Activated CD4-positive, alpha-beta memory T cell treated with anti-CD3 and anti-CD28 coated beads for 36 hours (primary cell): ENCODE measurements at regions of chr3 and their contacts with region 1.

Region 1: DNA sequence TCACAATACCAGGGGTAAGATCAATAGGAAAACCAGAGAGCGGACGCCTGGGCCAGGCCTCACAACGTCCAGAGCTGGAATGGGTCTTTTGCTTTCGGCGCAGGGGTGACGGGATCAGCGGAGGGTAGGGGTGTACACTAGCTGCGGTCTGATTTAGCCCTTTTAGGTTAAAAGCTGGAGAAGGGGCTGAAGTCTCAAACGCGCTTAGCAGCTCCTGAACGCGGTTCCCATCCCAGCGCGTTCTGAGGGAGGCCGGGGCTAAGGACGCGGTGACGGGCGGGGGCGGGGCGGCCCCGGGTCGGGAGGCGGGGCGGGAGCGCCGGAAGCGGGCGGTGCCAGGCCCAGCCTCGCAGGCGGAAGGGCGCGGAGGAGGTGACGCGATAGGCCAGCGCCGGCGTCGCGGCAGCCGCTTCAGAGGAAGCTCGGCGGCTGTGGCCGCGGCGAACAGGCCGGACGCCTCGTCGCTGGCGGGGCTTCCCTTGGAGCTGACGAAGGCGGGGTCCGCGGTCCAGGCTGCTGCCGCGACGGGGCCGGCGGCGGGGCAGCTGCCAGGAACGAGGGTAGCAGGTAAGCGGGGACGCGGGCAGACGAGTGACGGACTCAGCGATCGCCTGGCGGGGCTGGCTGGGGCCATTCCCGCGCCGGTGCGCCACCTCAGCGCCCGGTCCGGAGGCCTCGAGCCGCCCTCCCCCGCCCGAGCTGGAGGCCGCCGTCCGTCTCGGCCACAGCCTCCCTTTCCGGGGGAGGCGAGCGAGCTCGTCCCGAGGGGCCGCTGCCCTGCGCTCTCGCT is at the start of gene SENP5:
- DNase-seq: peak; percentile 94
- H3K4me3 Mint-ChIP-seq: peak within 1 kb of the TSS; percentile 84
- H3K27ac Mint-ChIP-seq: peak within 1 kb of the TSS; percentile 85
- H3K4me1 Mint-ChIP-seq: peaks cover 29% of the 10 kb centered on the region
- H3K27me3 Mint-ChIP-seq: no peaks in the 10 kb centered on the region
- total RNA-seq, gene SENP5: 30.5 to 32.0 TPM

Region 2: DNA sequence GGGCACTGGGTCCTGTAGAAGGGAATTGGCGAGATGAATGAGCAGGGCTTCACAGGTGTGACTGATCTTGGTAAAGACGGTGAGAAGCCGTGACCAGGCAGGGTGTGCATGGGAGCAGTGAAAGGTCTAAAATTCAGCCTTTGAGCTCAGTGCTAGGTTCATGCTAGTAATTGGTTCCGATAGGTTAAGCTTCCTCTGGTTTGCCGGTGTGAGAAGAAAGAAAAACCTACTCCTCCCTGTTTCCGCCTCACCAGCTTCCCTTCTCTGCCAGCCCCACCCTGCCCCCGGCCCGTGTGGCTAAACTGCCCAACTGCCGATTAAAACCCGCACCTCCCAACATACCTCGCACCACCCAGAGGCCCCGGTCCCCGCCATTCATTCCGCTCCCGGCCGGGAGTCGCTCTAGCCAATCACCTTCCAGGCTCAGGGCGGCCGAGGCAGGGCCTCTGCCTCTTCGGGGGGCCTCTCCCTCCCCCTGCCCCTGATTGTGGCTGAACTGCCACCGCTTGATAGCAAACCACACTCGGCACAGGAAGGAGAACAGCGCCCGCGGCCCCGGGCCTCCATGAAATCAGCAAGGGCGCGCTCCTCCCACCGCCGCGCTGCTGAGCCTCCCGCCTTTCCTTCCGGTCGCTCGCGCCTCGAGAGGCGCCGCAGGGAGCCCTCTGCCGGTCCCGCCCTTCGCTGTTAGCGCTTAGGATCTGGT is 235.5 kb before region 1 on chr3:
- CTCF ChIA-PET with region 1: no interaction called
- POLR2A ChIA-PET with region 1: no interaction called
- intact Hi-C with region 1: loop called (anchors 10 kb)
- DNase-seq: peak; percentile 92
- H3K4me3 Mint-ChIP-seq: peak overlapping the region; percentile 80
- H3K27ac Mint-ChIP-seq: peak overlapping the region; percentile 94
- H3K4me1 Mint-ChIP-seq: peaks cover 53% of the 10 kb centered on the region
- H3K27me3 Mint-ChIP-seq: no peaks in the 10 kb centered on the region

Region 3: GRCh38 chr3:196883361-196883760 is 15.7 kb after region 1 on chr3:
- CTCF ChIA-PET with region 1: interaction called, 4 read pairs
- POLR2A ChIA-PET with region 1: interaction called, 12 read pairs
- intact Hi-C with region 1: loop called (anchors 1 kb)
- DNase-seq: no peak
- H3K4me3 Mint-ChIP-seq: no peak overlapping the region
- H3K27ac Mint-ChIP-seq: no peak overlapping the region
- H3K4me1 Mint-ChIP-seq: peaks cover 50% of the 10 kb centered on the region
- H3K27me3 Mint-ChIP-seq: no peaks in the 10 kb centered on the region